IMR-90 (cell line): ENCODE measurements at regions of chr3 and their contacts with region 1.

Region 1: GRCh38 chr3:50138266-50139200 is 16.6 kb upstream of the SEMA3F start:
- DNase-seq: no peak
- ATAC-seq: peak; percentile 64
- H3K4me3 ChIP-seq: no peak overlapping the region
- H3K27ac ChIP-seq: no peak overlapping the region
- H3K4me1 ChIP-seq: peaks cover 11% of the 10 kb centered on the region
- H3K27me3 ChIP-seq: peaks cover 6% of the 10 kb centered on the region; the same call in 1 of the 2 replicates
- CTCF ChIP-seq: no peak
- POLR2A ChIP-seq: no peak
- RAD21 ChIP-seq: no peak

Region 2: DNA sequence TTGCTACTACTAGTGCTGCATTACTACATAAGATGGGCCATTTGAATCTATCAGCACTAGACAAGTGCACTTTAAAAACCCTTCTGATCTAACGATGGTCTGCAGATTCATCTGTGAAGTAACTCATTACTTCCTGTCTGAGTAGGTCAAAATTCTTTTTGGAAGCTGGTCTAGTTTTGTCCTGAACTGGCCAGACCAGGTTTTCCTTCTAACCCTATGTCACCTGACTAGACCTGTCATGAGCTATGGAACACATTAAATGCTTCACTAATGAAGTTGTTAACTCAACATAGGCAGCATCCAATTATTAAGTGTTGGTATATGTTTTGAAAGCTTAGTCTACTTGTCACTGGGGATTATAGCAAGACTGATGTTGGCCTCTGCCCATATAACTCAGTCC is 59.9 kb before region 1 on chr3:
- CTCF ChIA-PET with region 1: no interaction called
- POLR2A ChIA-PET with region 1: interaction called, 12 read pairs
- dilution Hi-C with region 1: no loop called
- in situ Hi-C with region 1: no loop called
- intact Hi-C with region 1: no loop called
- DNase-seq: no peak
- ATAC-seq: no peak
- H3K4me3 ChIP-seq: no peak overlapping the region
- H3K27ac ChIP-seq: no peak overlapping the region
- H3K4me1 ChIP-seq: no peaks in the 10 kb centered on the region
- H3K27me3 ChIP-seq: no peaks in the 10 kb centered on the region
- CTCF ChIP-seq: no peak
- POLR2A ChIP-seq: no peak
- RAD21 ChIP-seq: no peak

Region 3: GRCh38 chr3:50227390-50228183 is 89.1 kb after region 1 on chr3:
- CTCF ChIA-PET with region 1: no interaction called
- POLR2A ChIA-PET with region 1: no interaction called
- dilution Hi-C with region 1: no loop called
- in situ Hi-C with region 1: no loop called
- intact Hi-C with region 1: no loop called
- DNase-seq: peak; percentile 80
- ATAC-seq: peak; percentile 90
- H3K4me3 ChIP-seq: peak overlapping the region; percentile 82
- H3K27ac ChIP-seq: peak overlapping the region; percentile 81
- H3K4me1 ChIP-seq: peaks cover 7% of the 10 kb centered on the region
- H3K27me3 ChIP-seq: peaks cover 3% of the 10 kb centered on the region; the same call in 1 of the 2 replicates
- CTCF ChIP-seq: peak; percentile 91
- POLR2A ChIP-seq: peak; percentile 47; the same call in 1 of the 2 replicates
- RAD21 ChIP-seq: peak; percentile 94